ENCODE measurements at regions of chr5 and their contacts with region 1.

Region 1: DNA sequence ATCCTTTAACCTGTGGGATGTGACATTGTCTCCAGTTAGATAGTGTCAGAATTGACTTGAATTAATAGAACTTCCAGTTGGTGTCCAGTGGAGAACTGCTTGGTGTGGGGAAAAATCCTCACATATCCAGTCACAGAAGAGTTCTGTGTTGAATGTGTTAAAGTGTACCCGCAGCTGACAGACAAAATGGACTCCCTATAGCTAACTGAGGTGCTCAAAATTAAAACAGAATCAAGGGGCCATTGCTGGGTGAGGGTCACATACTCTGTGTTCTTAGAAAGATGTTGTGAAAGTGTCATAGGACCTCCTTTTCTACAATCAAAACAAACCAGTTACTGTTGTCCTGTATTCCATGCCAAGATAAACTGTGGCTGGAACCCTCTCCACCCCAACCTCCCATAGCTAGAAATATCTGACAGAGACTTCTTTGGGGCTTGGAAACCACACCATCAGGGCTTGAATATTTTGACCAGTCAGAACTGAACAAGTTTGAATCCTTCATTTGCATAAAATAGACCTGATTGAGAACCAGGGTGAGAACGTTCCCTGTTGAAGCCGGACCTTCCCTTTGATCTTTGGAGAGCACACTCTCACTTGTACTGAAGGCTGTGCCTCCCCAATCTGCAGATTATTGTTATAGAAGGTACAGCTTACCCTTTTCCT is 164.0 kb upstream of the ZNF608 start:
- DNase-seq: no peak
- ATAC-seq: no peak
- H3K4me3 Mint-ChIP-seq: no peak overlapping the region
- H3K27ac Mint-ChIP-seq: no peak overlapping the region
- H3K4me1 Mint-ChIP-seq: peaks cover 30% of the 10 kb centered on the region
- H3K27me3 Mint-ChIP-seq: no peaks in the 10 kb centered on the region
- CTCF ChIP-seq: no peak

Region 2: GRCh38 chr5:124790895-124791732 is 119.4 kb before region 1 on chr5:
- CTCF ChIA-PET with region 1: no interaction called
- POLR2A ChIA-PET with region 1: interaction called, 10 read pairs
- intact Hi-C with region 1: no loop called
- DNase-seq: no peak
- ATAC-seq: no peak
- H3K4me3 Mint-ChIP-seq: no peak overlapping the region
- H3K27ac Mint-ChIP-seq: no peak overlapping the region
- H3K4me1 Mint-ChIP-seq: peaks cover 4% of the 10 kb centered on the region
- H3K27me3 Mint-ChIP-seq: no peaks in the 10 kb centered on the region
- CTCF ChIP-seq: no peak

Region 3: GRCh38 chr5:124972703-124973102 is 62.2 kb after region 1 on chr5:
- CTCF ChIA-PET with region 1: no interaction called
- POLR2A ChIA-PET with region 1: no interaction called
- intact Hi-C with region 1: no loop called
- DNase-seq: no peak
- ATAC-seq: no peak
- H3K4me3 Mint-ChIP-seq: no peak overlapping the region
- H3K27ac Mint-ChIP-seq: no peak overlapping the region
- H3K4me1 Mint-ChIP-seq: peaks cover 14% of the 10 kb centered on the region
- H3K27me3 Mint-ChIP-seq: no peaks in the 10 kb centered on the region
- CTCF ChIP-seq: no peak

Measured in activated B cell treated with CpG ODN at 0.5 μM for 24 hours (primary cell).